Dendritic cell treated with granulocyte-macrophage colony-stimulating factor and Interleukin-4, amounts not matched to agents 40 ng/mL and 50 ng/mL, for 4 days (primary cell): ENCODE measurements at regions of chr11 and their contacts with region 1.

Region 1: GRCh38 chr11:18105802-18106574 is at the start of gene SAAL1:
- H3K4me3 Mint-ChIP-seq: peak within 1 kb of the TSS; percentile 86
- H3K27ac Mint-ChIP-seq: peak within 1 kb of the TSS; percentile 92
- H3K4me1 Mint-ChIP-seq: peaks cover 29% of the 10 kb centered on the region
- H3K27me3 Mint-ChIP-seq: peaks cover 14% of the 10 kb centered on the region

Region 2: DNA sequence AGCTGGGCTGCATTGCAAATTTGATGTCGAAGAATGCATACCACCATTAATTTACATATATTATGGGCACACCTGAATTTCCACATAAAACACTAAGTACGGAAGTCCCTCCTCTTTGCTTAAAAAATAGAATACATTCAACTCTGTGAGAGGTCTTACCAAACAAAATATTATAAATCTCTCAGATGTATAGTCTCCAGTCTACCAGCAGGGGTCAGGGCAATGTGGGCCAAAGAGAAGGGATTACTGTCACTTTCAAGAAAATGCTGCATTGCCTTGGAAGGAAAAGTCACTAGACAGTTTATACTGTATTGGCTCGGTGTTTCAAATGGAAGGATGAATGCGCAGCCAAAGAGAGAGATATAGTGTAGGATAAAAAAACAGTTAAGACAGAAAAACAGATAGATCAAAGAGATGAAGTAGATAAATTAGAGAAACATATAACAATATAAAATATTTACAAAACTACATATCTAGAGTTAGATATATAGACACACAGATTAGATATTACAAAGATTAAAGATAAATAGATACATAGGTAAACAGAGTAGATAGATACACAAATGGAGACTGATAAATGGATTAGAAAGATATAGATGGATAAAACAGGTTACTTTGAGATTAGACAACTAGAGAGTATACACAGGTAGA is 114.1 kb before region 1 on chr11:
- intact Hi-C with region 1: loop called (anchors 5 kb)
- H3K4me3 Mint-ChIP-seq: no peak overlapping the region
- H3K27ac Mint-ChIP-seq: no peak overlapping the region
- H3K4me1 Mint-ChIP-seq: no peaks in the 10 kb centered on the region
- H3K27me3 Mint-ChIP-seq: no peaks in the 10 kb centered on the region

Region 3: DNA sequence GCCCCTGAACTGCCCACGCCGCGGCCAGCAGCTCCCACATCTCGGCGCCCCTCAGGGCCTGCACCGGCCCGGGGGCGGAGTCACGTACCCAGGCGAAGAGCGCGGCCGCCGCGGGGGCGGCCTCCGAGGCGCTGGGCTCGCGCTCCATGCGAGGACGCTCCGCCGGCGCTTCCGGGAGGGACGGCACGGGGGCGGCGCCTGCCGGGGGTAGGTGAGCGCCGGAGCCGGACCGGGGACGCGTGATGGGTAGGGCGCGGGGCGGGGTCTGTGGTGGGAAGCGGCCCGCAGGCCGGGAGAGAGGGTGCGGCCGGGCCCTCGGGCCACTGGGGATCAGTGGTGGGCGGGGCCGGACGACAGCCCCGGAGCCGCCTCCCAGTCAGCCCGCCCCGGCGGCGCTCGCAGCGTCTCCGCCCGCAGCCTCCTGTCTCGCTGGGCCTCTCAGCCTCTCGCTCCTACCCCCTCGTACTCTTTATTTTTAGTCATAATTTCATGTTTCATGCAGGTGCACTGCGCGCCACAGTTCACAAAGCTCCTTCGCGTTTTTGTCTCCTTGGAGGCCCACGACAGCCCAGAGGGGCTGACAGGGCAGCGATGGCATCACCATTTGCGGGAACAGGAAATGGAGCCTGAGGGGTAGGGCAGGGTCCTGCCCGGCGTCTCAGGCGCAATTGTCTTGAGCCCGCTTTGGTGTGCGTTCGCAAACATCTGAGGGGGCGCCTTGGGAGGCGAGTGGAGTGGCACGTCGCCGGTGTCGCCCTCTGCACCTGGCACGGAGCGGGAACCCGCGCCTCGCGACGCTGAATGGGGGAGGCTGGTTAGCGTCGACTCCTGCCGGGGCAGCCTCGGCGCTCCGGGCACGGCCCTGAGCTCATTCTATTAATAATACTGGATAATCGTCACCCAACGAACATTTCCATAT is 92.9 kb before region 1 on chr11 and contains the start of gene SERGEF:
- intact Hi-C with region 1: loop called (anchors 5 kb)
- H3K4me3 Mint-ChIP-seq: peak within 1 kb of the TSS; percentile 98
- H3K27ac Mint-ChIP-seq: peak within 1 kb of the TSS; percentile 88
- H3K4me1 Mint-ChIP-seq: peaks cover 39% of the 10 kb centered on the region
- H3K27me3 Mint-ChIP-seq: peaks cover 10% of the 10 kb centered on the region